AG04450 (cell line): ENCODE measurements at regions of chr1 and their contacts with region 1.

Region 1: DNA sequence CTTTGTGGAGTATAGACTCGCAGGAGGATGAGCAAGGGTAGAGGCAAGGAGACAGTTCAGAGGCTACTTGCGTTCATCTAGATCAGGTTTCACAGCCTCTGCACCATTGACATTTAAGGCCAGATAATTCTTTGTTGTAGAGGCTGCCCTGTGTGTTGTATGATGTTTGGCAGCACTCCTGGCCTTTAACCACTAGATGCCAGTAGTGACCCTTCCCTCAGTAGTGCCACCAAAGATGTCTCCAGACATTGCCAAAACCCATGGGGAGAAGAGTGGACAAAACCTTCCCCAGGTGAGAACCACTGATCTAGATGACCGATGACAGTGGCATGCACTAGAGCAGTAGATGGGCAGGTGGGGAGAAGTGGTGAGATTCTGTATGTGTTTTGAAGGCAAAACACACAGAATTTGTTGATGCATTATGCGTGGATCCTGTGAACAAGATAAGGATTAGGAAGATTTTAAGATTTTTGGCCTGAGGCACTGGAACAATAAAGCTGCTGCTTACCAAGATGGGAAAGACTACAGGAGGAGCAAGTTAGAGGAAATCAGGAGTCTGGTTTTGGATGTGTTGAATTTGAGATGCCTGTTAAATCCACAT is 9.9 kb upstream of the COG2 start:
- DNase-seq: no peak
- H3K4me3 ChIP-seq: no peak overlapping the region
- H3K27ac ChIP-seq: no peak overlapping the region
- H3K27me3 ChIP-seq: peaks cover 3% of the 10 kb centered on the region
- CTCF ChIP-seq: peak; percentile 55

Region 2: DNA sequence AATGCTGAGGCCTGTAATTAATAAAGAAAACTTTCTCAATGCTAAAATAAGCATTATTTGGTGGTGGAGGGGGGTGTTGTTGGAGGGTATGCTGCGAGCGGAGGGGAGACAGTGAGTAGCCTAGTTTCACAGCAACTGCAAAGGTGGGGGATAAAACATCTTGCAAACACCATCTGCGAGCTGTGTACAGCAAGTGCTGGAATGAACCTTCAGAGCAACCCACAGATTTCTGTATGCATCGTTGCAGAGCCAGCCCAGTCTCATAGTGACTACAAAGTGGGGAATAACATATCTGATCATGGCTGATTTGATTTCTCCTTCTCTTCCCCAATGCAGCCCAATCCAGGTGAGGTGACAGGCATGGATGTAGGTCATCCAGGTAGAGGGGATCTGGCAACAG is 70.8 kb before region 1 on chr1:
- CTCF ChIA-PET with region 1: no interaction called
- POLR2A ChIA-PET with region 1: no interaction called
- DNase-seq: no peak
- H3K4me3 ChIP-seq: no peak overlapping the region
- H3K27ac ChIP-seq: no peak overlapping the region
- H3K27me3 ChIP-seq: peaks cover 2% of the 10 kb centered on the region
- CTCF ChIP-seq: no peak

Region 3: GRCh38 chr1:230642263-230642959 is 10.0 kb after region 1 on chr1 and contains the start of gene COG2:
- CTCF ChIA-PET with region 1: interaction called, 11 read pairs
- POLR2A ChIA-PET with region 1: no interaction called
- DNase-seq: peak; percentile 85
- H3K4me3 ChIP-seq: peak within 1 kb of the TSS; percentile 96
- H3K27ac ChIP-seq: peak within 1 kb of the TSS; percentile 73
- H3K27me3 ChIP-seq: peaks cover 10% of the 10 kb centered on the region
- CTCF ChIP-seq: peak; percentile 94
- polyA plus RNA-seq, gene COG2: 16.7 and 21.5 TPM in 2 replicates

Region 4: DNA sequence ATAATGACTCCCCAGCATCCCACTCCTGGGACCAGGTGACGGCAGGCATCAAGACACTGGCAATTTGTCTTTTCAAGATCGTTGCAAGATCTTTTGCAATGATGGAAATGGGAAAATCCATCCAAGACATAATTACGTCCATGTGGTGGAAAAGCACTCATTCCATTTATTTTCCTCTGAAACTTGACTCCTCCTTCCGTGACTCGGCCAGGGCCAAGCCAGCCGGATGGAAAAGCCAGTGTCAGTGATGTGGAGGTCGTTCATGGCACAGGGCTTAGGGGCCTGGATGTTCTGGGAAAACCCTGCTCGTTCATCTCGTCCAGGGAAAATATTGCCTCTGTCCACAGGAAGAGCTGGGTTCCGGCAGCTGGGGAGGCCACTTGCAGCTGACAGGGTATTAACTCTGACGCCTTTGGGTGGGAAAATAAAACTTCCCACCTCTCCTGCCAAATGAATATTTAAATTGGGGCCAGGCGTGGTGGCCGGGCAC is 189.8 kb after region 1 on chr1:
- CTCF ChIA-PET with region 1: no interaction called
- POLR2A ChIA-PET with region 1: no interaction called
- DNase-seq: no peak
- H3K4me3 ChIP-seq: no peak overlapping the region
- H3K27ac ChIP-seq: no peak overlapping the region
- H3K27me3 ChIP-seq: peaks cover 7% of the 10 kb centered on the region
- CTCF ChIP-seq: no peak

Region 5: GRCh38 chr1:230899841-230900251 is 267.5 kb after region 1 on chr1:
- CTCF ChIA-PET with region 1: no interaction called
- POLR2A ChIA-PET with region 1: no interaction called
- DNase-seq: peak; percentile 66
- H3K4me3 ChIP-seq: no peak overlapping the region
- H3K27ac ChIP-seq: peak overlapping the region; percentile 42
- H3K27me3 ChIP-seq: no peaks in the 10 kb centered on the region
- CTCF ChIP-seq: no peak

Region 6: GRCh38 chr1:232344791-232345399 is 1712.5 kb after region 1 on chr1:
- CTCF ChIA-PET with region 1: no interaction called
- POLR2A ChIA-PET with region 1: no interaction called
- DNase-seq: no peak
- H3K4me3 ChIP-seq: no peak overlapping the region
- H3K27ac ChIP-seq: no peak overlapping the region
- H3K27me3 ChIP-seq: no peaks in the 10 kb centered on the region
- CTCF ChIP-seq: no peak